ENCODE measurements at regions of chr11 and their contacts with region 1.

Region 1: GRCh38 chr11:58465690-58466089 is 23.7 kb upstream of the OR5B12 start:
- DNase-seq: peak; percentile 84
- H3K4me3 ChIP-seq: no peak overlapping the region
- H3K27ac ChIP-seq: no peak overlapping the region
- H3K4me1 ChIP-seq: peaks cover 5% of the 10 kb centered on the region
- H3K27me3 ChIP-seq: no peaks in the 10 kb centered on the region
- CTCF ChIP-seq: no peak

Region 2: GRCh38 chr11:58428021-58428420 is 37.7 kb before region 1 on chr11 and contains the start of gene OR5B2:
- CTCF ChIA-PET with region 1: no interaction called
- dilution Hi-C with region 1: no loop called
- in situ Hi-C with region 1: no loop called
- intact Hi-C with region 1: loop called (anchors 5 kb)
- DNase-seq: no peak
- H3K4me3 ChIP-seq: no peak within 1 kb of the TSS
- H3K27ac ChIP-seq: no peak within 1 kb of the TSS
- H3K4me1 ChIP-seq: no peaks in the 10 kb centered on the region
- H3K27me3 ChIP-seq: no peaks in the 10 kb centered on the region
- CTCF ChIP-seq: no peak
- total RNA-seq, gene OR5B2: under 0.01 TPM in 1 of 2 donors, not detected in the other

Region 3: GRCh38 chr11:58524232-58525036 is 58.7 kb after region 1 on chr11:
- CTCF ChIA-PET with region 1: no interaction called
- dilution Hi-C with region 1: no loop called
- in situ Hi-C with region 1: no loop called
- intact Hi-C with region 1: no loop called
- DNase-seq: peak; percentile 63
- H3K4me3 ChIP-seq: no peak overlapping the region
- H3K27ac ChIP-seq: no peak overlapping the region
- H3K4me1 ChIP-seq: peaks cover 3% of the 10 kb centered on the region
- H3K27me3 ChIP-seq: no peaks in the 10 kb centered on the region
- CTCF ChIP-seq: peak; percentile 90 to 98